Activated CD4-positive, alpha-beta T cell treated with anti-CD3 and anti-CD28 coated beads for 36 hours (primary cell): ENCODE measurements at regions of chr17 and their contacts with region 1.

Region 1: GRCh38 chr17:74296548-74296936 is 22.5 kb downstream of the DNAI2 start:
- DNase-seq: peak; percentile 59
- ATAC-seq: peak; percentile 24
- H3K4me3 Mint-ChIP-seq: no peak overlapping the region
- H3K27ac Mint-ChIP-seq: no peak overlapping the region
- H3K4me1 Mint-ChIP-seq: peaks cover 23% of the 10 kb centered on the region
- H3K27me3 Mint-ChIP-seq: peaks cover 5% of the 10 kb centered on the region

Region 2: GRCh38 chr17:74239170-74239569 is 57.4 kb before region 1 on chr17:
- CTCF ChIA-PET with region 1: no interaction called
- POLR2A ChIA-PET with region 1: no interaction called
- intact Hi-C with region 1: no loop called
- DNase-seq: no peak
- ATAC-seq: no peak
- H3K4me3 Mint-ChIP-seq: no peak overlapping the region
- H3K27ac Mint-ChIP-seq: no peak overlapping the region
- H3K4me1 Mint-ChIP-seq: no peaks in the 10 kb centered on the region
- H3K27me3 Mint-ChIP-seq: no peaks in the 10 kb centered on the region

Region 3: DNA sequence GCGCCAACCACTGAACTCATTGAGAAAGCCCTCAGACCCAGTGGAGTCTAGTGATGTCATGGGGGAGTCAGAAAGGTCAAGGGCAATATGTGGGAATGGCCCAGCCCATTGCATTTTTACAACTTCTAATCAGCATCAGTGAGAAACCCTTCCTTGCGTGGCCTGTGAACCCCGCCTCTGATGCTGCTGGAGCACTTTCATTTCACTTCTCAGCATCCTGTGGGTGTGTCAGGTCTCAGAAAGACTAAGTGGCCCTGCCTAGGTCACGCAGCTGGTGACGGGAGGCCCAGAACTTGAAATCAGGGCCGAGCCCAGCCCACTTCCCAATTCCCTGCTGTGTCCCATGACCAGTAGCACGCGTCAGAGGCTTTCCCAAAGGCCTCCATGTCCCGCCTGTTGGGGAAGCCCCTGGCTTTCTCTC is 16.4 kb before region 1 on chr17:
- CTCF ChIA-PET with region 1: interaction called, 12 read pairs
- POLR2A ChIA-PET with region 1: interaction called, 4 read pairs
- intact Hi-C with region 1: loop called in 1 of 2 experiments (anchors 2 kb)
- DNase-seq: peak; percentile 75
- ATAC-seq: peak; percentile 80
- H3K4me3 Mint-ChIP-seq: no peak overlapping the region
- H3K27ac Mint-ChIP-seq: peak overlapping the region; percentile 74
- H3K4me1 Mint-ChIP-seq: peaks cover 38% of the 10 kb centered on the region
- H3K27me3 Mint-ChIP-seq: no peaks in the 10 kb centered on the region

Region 4: DNA sequence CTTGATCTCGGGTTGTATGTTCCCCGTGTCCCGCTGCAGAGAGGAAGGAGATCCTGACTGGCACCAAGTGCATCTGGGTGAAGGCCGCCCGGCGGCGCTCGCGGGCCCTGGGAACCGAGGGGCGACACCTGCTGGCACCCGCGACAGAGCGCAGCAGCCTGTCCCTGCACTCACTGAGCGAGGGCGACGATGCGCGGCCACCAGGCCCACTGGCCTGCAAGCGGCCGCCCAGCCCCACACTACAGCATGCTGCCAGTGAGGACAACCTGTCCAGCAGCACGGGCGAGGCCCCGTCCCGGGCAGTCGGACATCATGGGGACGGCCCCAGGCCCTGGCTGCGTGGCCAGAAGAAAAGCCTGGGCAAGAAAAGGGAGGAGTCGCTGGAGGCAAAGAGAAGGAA is 57.6 kb after region 1 on chr17:
- CTCF ChIA-PET with region 1: interaction called, 9 read pairs
- POLR2A ChIA-PET with region 1: no interaction called
- intact Hi-C with region 1: loop called (anchors 1 kb)
- DNase-seq: peak; percentile 88
- ATAC-seq: peak; percentile 90
- H3K4me3 Mint-ChIP-seq: no peak overlapping the region
- H3K27ac Mint-ChIP-seq: no peak overlapping the region
- H3K4me1 Mint-ChIP-seq: no peaks in the 10 kb centered on the region
- H3K27me3 Mint-ChIP-seq: peaks cover 53% of the 10 kb centered on the region

Region 5: DNA sequence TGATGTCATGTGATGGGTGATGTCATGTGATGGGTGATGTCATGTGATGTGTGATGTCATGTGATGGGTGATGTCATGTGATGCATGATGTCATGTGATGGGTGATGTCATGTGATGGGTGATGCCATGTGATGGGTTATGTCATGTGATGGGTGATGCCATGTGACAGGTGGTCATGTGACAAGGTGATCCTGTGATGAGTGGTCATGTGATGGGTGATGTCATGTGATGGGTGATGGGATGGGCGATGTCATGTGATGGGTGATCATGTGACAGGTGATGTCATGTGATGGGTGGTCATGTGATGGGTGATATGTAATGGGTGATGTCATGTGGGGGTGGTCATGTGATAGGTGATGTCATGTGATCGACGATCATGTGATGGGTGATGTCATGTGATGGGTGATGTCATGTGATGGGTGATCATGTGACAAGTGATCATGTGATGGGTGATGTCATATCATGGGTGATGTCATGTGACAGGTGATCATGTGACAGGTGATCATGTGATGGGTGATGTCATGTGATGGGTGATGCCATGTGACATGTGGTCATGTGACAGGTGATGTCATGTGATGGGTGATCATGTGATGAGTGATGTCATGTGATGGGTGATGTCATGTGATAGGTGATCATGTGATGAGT is 217.6 kb after region 1 on chr17:
- CTCF ChIA-PET with region 1: interaction called, 5 read pairs
- POLR2A ChIA-PET with region 1: no interaction called
- intact Hi-C with region 1: loop called in 1 of 2 experiments (anchors 5 kb)
- DNase-seq: peak; percentile 78
- ATAC-seq: peak; percentile 17
- H3K4me3 Mint-ChIP-seq: peak overlapping the region; percentile 72
- H3K27ac Mint-ChIP-seq: peak overlapping the region; percentile 95
- H3K4me1 Mint-ChIP-seq: peaks cover 31% of the 10 kb centered on the region
- H3K27me3 Mint-ChIP-seq: peaks cover 14% of the 10 kb centered on the region

Region 6: GRCh38 chr17:74702116-74702871 is 405.8 kb after region 1 on chr17:
- CTCF ChIA-PET with region 1: no interaction called
- POLR2A ChIA-PET with region 1: no interaction called
- intact Hi-C with region 1: no loop called
- DNase-seq: no peak
- ATAC-seq: no peak
- H3K4me3 Mint-ChIP-seq: no peak overlapping the region
- H3K27ac Mint-ChIP-seq: no peak overlapping the region
- H3K4me1 Mint-ChIP-seq: no peaks in the 10 kb centered on the region
- H3K27me3 Mint-ChIP-seq: peaks cover 2% of the 10 kb centered on the region